GM18951 (cell line): ENCODE measurements at regions of chr1 and their contacts with region 1.

Region 1: DNA sequence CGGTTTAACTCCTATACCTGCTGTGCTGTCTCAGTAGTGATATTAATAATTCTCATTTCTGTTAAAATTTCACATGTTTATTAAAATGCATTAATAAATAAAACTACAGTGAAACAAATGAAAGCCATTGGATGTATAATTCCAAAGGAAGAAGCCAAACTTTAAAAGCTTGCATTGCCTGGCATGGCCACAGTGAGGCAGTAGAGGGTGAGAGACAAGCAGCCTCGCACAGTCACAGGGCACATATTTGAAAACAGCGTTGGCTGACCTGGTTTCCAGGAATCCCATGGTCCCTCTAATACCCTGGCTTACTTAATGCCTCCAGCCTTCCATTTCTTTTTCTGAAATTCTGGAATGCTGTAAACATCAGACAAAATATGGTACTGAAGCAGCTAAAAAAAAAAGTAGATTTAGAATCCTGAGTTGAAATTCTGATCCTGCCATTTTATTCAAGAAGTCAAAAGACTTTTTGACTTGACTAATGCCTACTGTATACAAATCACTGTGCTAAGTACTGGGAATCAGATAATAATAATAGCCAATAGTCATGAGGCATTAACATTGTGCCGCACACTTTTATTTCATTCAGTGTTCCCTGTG is 6.7 kb upstream of the RNASEL start:
- POLR2A ChIP-seq: no peak

Region 2: DNA sequence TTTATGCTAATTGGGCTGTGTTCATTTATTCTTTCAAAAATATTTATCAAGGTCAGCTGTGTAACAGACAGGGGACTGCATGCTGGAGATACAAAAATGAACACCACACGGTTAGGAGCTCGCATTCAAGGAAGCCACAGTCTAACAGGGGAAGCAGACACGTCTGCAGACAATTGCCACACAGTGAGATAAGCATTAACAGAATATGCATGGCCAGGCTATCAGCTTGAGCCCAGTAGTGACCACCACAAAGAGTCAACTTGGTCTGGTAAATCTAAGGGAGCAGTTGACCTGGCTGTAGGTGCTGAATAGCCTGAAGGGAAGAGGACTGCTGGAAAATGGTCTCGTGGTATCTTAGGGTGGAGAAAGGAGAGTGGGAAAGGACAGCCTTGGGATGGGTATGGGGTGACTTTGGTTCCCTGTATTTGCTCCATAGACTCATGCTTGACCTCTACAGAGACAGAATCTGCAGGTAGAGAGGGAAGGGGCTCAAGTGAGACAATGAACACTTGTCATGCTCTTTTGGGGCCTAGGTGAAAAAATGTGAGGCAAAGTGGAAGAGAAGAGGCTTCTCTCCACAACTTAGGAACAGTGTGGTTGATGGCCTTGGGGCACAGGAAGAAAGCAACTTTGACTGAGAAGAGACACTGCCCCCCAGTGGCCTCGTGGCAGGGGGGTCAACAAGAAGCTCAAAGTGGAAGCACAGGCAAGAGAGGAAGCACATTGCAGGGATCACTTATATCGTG is 186.3 kb after region 1 on chr1:
- in situ Hi-C with region 1: loop called (anchors 5 kb)
- POLR2A ChIP-seq: no peak

Region 3: GRCh38 chr1:182952677-182953431 is 357.1 kb after region 1 on chr1 and contains the start of gene SHCBP1L:
- in situ Hi-C with region 1: no loop called
- POLR2A ChIP-seq: no peak